ENCODE measurements at regions of chr18 and their contacts with region 1.

Region 1: DNA sequence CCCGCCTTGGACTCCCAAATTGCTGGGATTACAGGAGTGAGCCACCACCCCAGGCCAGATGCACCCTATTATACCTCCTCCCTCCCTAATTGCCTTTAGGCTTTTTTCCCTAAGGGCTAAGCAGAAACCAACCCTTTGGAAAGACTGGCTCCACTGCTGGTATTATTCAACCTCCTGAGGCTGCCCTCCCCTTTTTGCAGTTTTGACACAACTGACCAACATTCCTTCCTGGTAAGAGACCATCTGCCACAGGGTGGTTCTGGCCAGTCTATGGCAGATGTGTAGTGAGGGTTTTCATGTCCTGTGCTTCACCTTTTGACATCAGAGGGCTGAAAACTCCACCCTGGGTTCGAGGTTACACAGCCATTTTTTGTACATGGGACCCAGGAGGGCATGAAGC is 1785.3 kb upstream of the CELF4 start:
- DNase-seq: no peak
- H3K4me3 ChIP-seq: no peak overlapping the region
- H3K27ac ChIP-seq: no peak overlapping the region
- H3K4me1 ChIP-seq: no peaks in the 10 kb centered on the region
- H3K27me3 ChIP-seq: no peaks in the 10 kb centered on the region
- CTCF ChIP-seq: no peak
- EP300 ChIP-seq: no peak
- POLR2A ChIP-seq: no peak

Region 2: GRCh38 chr18:40019797-40020392 is 669.0 kb after region 1 on chr18:
- intact Hi-C with region 1: loop called in 1 of 4 experiments (anchors 10 kb)
- DNase-seq: no peak
- H3K4me3 ChIP-seq: no peak overlapping the region
- H3K27ac ChIP-seq: no peak overlapping the region
- H3K4me1 ChIP-seq: no peaks in the 10 kb centered on the region
- H3K27me3 ChIP-seq: no peaks in the 10 kb centered on the region
- CTCF ChIP-seq: no peak
- EP300 ChIP-seq: no peak
- POLR2A ChIP-seq: no peak

Measured in ovary (tissue), 10 donors.